Prostate gland (tissue), 2 donors: ENCODE measurements at regions of chr12 and their contacts with region 1.

Region 1: GRCh38 chr12:2853626-2854025 is 3.2 kb downstream of the TEX52 start:
- DNase-seq: peak; percentile 59
- H3K4me3 ChIP-seq: no peak overlapping the region
- H3K27ac ChIP-seq: no peak overlapping the region
- H3K4me1 ChIP-seq: no peaks in the 10 kb centered on the region
- H3K27me3 ChIP-seq: no peaks in the 10 kb centered on the region
- CTCF ChIP-seq: peak; percentile 43 to 78 (median 58)
- POLR2A ChIP-seq: no peak

Region 2: DNA sequence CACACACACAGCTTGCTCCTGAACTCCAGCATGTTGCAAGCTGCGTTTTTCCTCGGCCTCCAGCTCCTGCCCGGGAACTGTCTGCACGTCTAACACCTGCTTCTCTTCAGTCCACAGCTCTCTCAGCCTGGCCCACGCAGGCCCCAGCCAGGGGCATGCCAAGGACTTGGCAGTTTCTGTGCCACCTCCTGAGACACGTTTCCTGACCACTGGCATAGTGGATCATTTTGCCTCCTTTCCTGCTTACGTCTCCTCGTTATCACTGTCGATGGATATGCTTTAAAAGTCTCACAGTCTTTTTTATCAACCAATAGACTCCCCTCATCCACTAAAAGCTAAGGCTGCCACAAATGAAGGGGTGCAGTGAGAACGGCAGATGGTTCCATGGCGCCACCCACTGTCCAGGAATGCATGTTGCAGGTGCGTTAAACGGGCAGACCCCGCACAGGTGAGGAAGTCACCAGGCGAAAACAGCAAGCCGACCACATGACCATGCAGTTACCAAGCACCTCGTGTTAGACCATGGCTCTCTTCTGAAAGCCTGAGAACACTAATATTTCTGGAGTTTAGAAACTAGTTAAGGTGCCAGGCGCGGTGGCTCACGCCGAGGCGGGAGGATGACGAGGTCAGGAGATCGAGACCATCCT is 90.9 kb after region 1 on chr12:
- intact Hi-C with region 1: loop called (anchors 10 kb)
- DNase-seq: peak; percentile 49
- H3K4me3 ChIP-seq: no peak overlapping the region
- H3K27ac ChIP-seq: no peak overlapping the region
- H3K4me1 ChIP-seq: no peaks in the 10 kb centered on the region
- H3K27me3 ChIP-seq: no peaks in the 10 kb centered on the region
- CTCF ChIP-seq: peak; percentile 56 to 82 (median 68)
- POLR2A ChIP-seq: no peak

Region 3: DNA sequence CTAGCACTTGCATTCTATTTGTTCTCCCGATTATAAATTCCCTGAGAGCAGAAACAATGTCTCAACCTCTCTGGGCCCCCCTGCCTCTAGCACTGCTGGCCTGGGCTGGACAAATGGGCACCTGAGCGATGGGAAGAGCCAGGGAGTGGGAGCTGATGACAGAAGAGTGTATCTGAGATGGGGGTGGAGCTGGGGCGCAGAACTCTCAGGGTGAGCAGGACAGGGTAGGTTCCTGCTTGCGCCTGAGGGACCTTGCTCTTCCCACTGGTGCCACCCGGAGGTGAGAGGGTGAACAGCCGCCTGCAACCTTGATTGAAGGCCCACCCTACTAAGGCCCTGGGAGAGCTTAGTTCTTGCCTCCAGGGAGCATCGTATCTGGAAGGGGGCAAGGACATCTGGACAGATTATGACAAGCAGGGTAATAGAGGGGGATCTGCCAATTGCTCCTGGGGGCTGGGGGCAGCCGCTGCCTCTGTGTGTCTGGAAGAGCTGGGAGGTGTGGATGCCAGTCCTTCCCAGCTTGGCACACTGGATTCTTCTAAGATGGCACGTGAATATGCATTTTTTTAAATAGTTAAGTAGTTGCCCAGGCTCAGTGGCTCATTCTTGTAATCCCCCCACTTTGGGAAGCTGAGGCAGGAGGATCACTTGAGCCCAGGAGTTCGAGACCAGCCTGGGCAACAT is 180.6 kb after region 1 on chr12:
- intact Hi-C with region 1: loop called (anchors 5 kb)
- DNase-seq: no peak
- H3K4me3 ChIP-seq: no peak overlapping the region
- H3K27ac ChIP-seq: no peak overlapping the region
- H3K4me1 ChIP-seq: no peaks in the 10 kb centered on the region
- H3K27me3 ChIP-seq: no peaks in the 10 kb centered on the region
- CTCF ChIP-seq: peak in 3 of 4 experiments; percentile 16 to 66 (median 39)
- POLR2A ChIP-seq: no peak